Panc1 (cell line): ENCODE measurements at regions of chr19 and their contacts with region 1.

Region 1: GRCh38 chr19:56252699-56253422 is 19.7 kb upstream of the EDDM13 start:
- DNase-seq: peak; percentile 58
- ATAC-seq: peak; percentile 94
- H3K4me3 ChIP-seq: no peak overlapping the region
- H3K27ac ChIP-seq: peak overlapping the region; percentile 66
- H3K4me1 ChIP-seq: no peaks in the 10 kb centered on the region
- H3K27me3 ChIP-seq: no peaks in the 10 kb centered on the region
- CTCF ChIP-seq: peak; percentile 98

Region 2: DNA sequence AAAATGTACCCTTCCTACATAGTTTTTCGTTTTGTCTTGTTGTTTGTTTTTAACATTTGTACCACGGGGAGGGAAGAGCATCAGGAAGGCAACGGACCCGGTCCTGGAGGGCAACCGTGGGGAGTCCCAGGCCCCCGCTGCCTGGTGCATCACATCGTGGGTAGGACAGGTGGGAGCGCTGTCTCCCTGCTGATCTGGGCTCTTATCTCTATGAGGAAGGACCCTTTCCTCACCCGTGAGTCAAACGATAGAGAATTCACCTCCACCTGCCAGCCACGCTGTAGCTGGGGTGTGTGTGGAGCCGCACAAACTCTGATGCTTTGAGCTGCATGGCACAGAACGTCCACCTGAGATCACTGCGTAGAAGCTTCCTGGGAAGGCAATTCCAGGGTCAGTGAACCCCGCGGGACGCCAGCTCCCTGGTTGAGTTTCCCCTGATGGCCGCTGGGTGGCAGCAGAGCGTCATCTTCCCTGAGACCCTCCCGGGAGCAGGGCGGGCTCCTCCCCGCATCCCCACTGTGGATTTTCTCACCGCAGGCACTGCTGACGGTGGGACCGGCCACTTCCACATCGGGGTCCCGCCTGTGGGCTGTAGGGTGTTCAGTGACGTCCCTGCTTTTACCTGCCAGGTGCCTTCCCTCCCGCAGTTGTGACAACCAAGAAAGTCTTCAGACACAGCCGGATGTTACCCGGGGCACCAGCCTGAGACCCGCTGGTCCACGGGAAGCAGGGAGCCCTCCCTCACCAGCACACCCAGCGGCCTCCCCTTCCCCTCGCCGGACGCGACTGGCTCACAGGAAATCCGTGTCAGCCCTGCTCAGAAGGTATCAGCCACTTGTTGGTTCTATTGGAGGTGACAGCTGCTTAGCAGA is 186.5 kb before region 1 on chr19:
- CTCF ChIA-PET with region 1: interaction called, 12 read pairs
- POLR2A ChIA-PET with region 1: no interaction called
- in situ Hi-C with region 1: no loop called
- intact Hi-C with region 1: loop called (anchors 10 kb)
- DNase-seq: peak; percentile 41
- ATAC-seq: peak; percentile 88
- H3K4me3 ChIP-seq: peak overlapping the region; percentile 24 to 41
- H3K27ac ChIP-seq: no peak overlapping the region
- H3K4me1 ChIP-seq: peaks cover 5% of the 10 kb centered on the region; the same call in 1 of the 2 replicates
- H3K27me3 ChIP-seq: peaks cover 9% of the 10 kb centered on the region
- CTCF ChIP-seq: peak; percentile 99

Region 3: DNA sequence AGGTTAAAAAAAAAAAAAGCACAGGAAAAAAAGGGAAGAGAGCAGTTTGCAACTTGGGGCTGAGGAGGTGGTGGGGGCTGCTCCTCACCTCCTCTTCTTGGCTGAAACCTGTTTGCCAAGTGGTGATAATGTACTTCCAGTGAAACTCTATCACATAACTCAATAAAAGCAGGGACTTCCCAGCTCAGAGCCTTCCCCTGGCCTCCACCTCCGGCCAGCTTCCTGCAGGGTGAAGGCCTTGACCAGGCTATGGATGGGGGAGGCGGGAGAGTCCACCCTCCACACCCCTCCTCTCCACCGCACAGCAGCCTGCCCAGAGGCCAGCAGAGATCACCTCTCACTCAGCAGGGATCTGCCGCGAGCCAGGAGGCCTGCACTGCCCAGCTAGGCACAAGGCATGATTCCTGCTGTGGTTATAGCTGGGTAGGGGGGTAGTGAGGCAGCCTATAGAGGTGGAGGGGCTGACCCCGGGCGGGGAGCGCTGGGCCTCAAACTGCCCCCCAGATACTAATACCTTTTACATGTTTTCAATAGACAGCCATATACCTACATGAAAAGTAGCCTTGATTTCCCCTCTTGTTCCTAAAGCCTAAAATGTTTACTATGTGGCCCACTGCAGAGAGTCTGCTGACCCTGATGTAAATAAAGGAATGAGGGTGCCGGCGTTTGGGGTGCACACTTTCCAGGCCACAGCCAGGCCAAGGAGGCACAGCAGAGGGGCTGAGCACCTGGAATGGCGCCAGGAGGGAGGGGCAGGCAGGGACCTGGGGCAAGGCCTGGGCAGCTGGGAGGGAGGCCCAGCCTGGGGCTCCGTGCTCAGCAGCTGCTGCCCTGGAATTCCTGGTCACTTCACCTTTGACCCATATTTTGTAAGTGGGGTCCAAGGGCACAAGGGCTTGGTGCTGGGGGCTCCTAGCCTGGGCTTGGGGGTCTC is 142.1 kb before region 1 on chr19:
- CTCF ChIA-PET with region 1: interaction called, 3 read pairs
- POLR2A ChIA-PET with region 1: interaction called, 10 read pairs
- in situ Hi-C with region 1: no loop called
- intact Hi-C with region 1: no loop called
- DNase-seq: no peak
- ATAC-seq: peak; percentile 67
- H3K4me3 ChIP-seq: peak overlapping the region in 1 of 2 experiments; percentile 33; a peak in 2 of 4 replicates
- H3K27ac ChIP-seq: peak overlapping the region; percentile 87
- H3K4me1 ChIP-seq: peaks cover 98% of the 10 kb centered on the region
- H3K27me3 ChIP-seq: no peaks in the 10 kb centered on the region
- CTCF ChIP-seq: no peak

Region 4: GRCh38 chr19:56314562-56315077 is 61.8 kb after region 1 on chr19 and contains the start of gene ZSCAN5A:
- CTCF ChIA-PET with region 1: interaction called, 17 read pairs
- POLR2A ChIA-PET with region 1: interaction called, 6 read pairs
- in situ Hi-C with region 1: no loop called
- intact Hi-C with region 1: no loop called
- DNase-seq: peak; percentile 95
- ATAC-seq: peak; percentile 91
- H3K4me3 ChIP-seq: peak within 1 kb of the TSS; percentile 84 to 99
- H3K27ac ChIP-seq: peak within 1 kb of the TSS; percentile 98
- H3K4me1 ChIP-seq: peaks cover 11% of the 10 kb centered on the region; the same call in 1 of the 2 replicates
- H3K27me3 ChIP-seq: no peaks in the 10 kb centered on the region
- CTCF ChIP-seq: no peak
- total RNA-seq, gene ZSCAN5A: 13.8 TPM

Region 5: DNA sequence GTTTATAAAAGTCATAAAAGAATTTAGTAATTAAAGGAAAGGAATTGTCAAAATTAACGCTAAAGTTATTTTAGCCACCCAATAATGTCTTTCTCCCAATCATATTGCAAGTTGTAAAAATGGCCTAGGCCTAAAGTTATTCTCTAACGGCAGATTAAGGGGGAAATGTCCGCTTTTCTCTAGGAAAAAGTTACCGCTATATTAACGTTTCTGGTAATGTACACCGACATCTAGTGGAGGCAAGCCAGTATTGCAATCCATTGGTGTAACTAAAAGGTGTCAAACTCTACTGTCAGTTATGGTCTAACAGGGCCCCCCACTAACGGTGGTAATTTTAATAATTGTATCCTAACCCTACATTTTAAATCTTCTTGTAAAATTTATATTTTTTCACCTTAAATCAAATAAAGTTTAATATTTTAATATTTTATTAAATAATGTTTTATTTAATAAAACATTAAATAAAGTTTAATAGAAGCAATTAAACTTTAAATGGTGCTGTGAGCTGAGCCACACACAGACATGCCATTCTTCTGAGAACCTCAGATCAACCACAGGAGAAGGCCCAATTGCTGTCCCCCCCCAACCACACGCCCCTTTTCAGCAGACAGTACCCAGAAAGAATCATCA is 97.7 kb after region 1 on chr19:
- CTCF ChIA-PET with region 1: interaction called, 18 read pairs
- POLR2A ChIA-PET with region 1: no interaction called
- in situ Hi-C with region 1: no loop called
- intact Hi-C with region 1: no loop called
- DNase-seq: peak; percentile 45
- ATAC-seq: no peak
- H3K4me3 ChIP-seq: no peak overlapping the region
- H3K27ac ChIP-seq: no peak overlapping the region
- H3K4me1 ChIP-seq: no peaks in the 10 kb centered on the region; the same call in 1 of the 2 replicates
- H3K27me3 ChIP-seq: no peaks in the 10 kb centered on the region
- CTCF ChIP-seq: peak; percentile 93